Ascending aorta (tissue), 2 donors: ENCODE measurements at regions of chr3 and their contacts with region 1.

Region 1: DNA sequence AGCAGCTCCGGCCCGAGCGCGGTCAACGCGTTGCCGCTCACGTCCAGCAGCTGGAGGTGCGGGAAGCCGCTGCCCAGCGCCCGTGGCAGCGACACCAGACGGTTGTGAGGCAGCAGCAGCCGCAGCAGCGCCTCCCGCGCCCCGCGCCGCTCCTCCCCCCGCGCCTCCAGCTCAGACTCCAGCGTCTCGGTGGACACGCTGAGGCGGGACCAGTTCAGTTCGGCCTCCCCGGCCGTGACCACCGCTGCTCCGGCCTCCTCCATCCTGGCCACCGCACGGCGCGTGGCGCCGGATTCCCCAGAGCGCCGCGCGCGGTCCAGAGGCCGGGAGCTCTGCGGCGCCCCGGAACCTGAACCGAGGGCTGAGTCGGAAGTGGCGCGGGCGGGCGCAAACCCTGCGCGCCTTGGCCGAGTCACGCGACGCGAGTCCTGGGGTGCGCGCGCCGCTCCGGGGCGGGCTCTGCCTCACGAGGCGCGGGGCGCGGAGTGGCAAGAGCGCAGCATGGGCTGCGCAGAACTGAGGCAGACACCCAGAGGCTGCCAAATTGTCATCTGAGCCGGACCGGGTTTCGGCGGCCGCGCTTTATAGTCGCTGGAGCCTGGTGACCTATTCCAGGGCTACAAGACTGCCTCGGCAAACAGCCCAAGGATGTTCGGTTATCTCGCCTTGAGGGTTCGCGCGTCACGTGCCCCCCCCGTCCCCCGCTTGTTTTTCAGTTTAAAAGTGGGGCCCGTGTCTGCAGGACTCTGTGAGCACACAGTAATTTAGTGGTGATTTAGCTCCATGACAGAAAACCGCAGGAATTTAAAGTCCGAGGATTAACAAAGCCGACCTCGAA is at the start of gene LRRC58:
- DNase-seq: peak; percentile 42 to 94
- H3K4me3 ChIP-seq: peak within 1 kb of the TSS; percentile 89 to 96
- H3K27ac ChIP-seq: peak within 1 kb of the TSS; percentile 92 to 94
- H3K4me1 ChIP-seq: peaks cover 0 to 14% of the 10 kb centered on the region in 2 donors
- H3K27me3 ChIP-seq: no peaks in the 10 kb centered on the region
- CTCF ChIP-seq: peak in 1 of 3 experiments; percentile 23
- total RNA-seq, gene LRRC58: 14.7 TPM

Region 2: DNA sequence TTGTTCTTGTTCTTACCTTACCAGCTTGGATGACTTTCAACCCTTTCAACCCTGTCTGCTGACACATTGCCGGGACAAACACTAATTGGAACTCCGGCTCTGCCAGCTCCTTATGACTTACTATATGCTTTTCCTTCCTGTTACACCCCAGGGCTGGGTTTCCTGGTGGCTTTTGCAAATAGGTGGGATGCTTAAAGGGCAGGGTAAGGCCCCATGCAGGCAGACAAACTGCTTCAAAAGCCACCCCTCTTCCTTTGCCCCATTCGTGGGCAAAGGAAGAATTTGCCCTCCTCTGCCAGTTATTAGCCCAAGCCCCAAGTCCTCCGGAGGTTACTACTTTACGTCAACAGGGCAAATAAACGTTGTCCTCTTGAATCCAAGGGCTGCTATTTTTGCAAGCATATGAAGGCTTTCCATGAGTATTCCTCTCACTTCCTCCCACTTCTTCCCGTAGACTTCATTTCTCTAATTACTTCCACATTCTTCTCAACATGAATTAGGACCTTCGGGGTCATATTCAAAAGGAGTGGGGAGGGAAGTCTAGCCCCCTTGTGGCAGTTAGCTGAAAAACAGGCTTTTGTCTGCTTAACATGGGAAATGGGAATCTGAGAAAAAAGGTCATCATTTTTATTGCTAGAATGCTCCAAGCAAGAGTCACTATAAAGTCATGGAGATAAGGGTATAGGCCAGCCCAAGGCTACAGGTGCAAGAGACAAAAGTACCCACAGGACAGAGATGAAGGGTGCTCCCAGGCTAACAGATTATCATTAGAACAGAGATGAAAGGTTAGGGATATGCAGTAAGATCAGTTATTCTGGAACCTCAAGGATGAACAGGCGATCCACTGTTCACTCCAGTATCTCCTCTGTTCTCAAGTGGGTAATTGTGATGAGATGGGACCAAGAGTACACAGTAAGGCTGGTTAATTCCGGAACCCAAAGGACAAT is 157.9 kb after region 1 on chr3:
- intact Hi-C with region 1: loop called (anchors 5 kb)
- DNase-seq: peak in 1 of 2 donors; percentile 75
- H3K4me3 ChIP-seq: no peak overlapping the region
- H3K27ac ChIP-seq: peak overlapping the region; percentile 25 to 39
- H3K4me1 ChIP-seq: peaks cover 5 to 14% of the 10 kb centered on the region in 2 donors
- H3K27me3 ChIP-seq: no peaks in the 10 kb centered on the region
- CTCF ChIP-seq: peak; percentile 44 to 66 (median 50)

Region 3: GRCh38 chr3:120596116-120596852 is 247.1 kb after region 1 on chr3 and contains the start of gene NDUFB4:
- intact Hi-C with region 1: loop called (anchors 1 kb)
- DNase-seq: peak; percentile 87 to 98
- H3K4me3 ChIP-seq: peak within 1 kb of the TSS; percentile 68 to 87
- H3K27ac ChIP-seq: peak within 1 kb of the TSS; percentile 73 to 86
- H3K4me1 ChIP-seq: peaks cover 6 to 28% of the 10 kb centered on the region in 2 donors
- H3K27me3 ChIP-seq: no peaks in the 10 kb centered on the region
- CTCF ChIP-seq: no peak
- total RNA-seq, gene NDUFB4: 37.0 TPM